ENCODE measurements at regions of chr5 and their contacts with region 1.

Region 1: GRCh38 chr5:159451197-159452052 is 121.1 kb upstream of the IL12B start:
- DNase-seq: no peak

Region 2: DNA sequence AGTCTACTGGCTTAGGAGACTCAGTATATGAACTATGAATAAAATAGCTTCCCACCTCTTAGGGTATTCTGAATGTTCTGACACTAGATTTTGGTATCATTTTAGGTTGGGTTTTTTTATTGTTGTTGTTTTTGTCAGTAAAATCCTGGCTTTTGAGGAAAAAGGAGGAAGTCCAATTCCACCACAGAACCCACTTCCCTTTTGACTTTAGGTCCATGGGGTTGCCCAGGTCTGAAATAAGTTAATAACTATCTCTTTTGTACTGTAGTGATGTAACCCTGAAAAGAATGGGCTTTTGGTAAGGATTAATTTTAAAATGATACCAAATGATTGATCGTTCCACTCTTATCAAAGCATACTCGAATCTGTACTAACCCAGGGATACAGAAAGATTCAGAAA is 92.0 kb before region 1 on chr5:
- intact Hi-C with region 1: no loop called
- DNase-seq: no peak

Region 3: DNA sequence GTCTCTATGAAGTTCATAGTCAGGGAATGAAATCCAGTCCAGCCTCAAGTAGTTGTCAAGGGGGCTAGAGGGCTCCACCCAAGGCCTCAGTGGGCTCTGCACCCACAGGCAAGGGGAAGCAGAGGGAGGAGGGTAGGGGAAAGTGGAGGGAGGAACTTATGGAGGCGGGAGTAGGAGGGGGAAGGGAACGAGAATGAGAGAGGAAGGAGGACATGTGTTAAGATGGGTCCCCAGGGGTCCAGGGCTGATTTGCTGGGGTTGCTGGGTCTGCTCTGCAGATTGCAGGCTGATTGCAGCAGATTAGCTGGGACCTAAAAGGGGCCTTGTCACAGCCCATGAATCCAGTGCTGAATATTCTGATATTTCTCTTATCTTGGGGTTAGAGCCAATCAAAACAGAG is 45.8 kb after region 1 on chr5:
- intact Hi-C with region 1: no loop called
- DNase-seq: no peak

Region 4: GRCh38 chr5:159510282-159510681 is 58.9 kb after region 1 on chr5:
- intact Hi-C with region 1: loop called (anchors 1 kb)
- DNase-seq: peak; percentile 84

Region 5: GRCh38 chr5:159605585-159605984 is 154.2 kb after region 1 on chr5:
- intact Hi-C with region 1: loop called (anchors 5 kb)
- DNase-seq: no peak

Region 6: GRCh38 chr5:159773062-159773924 is 321.9 kb after region 1 on chr5:
- intact Hi-C with region 1: loop called (anchors 5 kb)
- DNase-seq: peak; percentile 89